Endothelial cell of umbilical vein (primary cell): ENCODE measurements at regions of chr4 and their contacts with region 1.

Region 1: GRCh38 chr4:110516106-110516922 is 40.4 kb downstream of the ENPEP start:
- DNase-seq: peak; percentile 86
- H3K4me3 ChIP-seq: peak overlapping the region; percentile 56 to 95 (median 79)
- H3K27ac ChIP-seq: peak overlapping the region; percentile 49
- H3K4me1 ChIP-seq: peaks cover 10% of the 10 kb centered on the region
- H3K27me3 ChIP-seq: peaks cover 0 to 4% of the 10 kb centered on the region in 2 experiments
- CTCF ChIP-seq: peak; percentile 80 to 82
- POLR2A ChIP-seq: no peak

Region 2: DNA sequence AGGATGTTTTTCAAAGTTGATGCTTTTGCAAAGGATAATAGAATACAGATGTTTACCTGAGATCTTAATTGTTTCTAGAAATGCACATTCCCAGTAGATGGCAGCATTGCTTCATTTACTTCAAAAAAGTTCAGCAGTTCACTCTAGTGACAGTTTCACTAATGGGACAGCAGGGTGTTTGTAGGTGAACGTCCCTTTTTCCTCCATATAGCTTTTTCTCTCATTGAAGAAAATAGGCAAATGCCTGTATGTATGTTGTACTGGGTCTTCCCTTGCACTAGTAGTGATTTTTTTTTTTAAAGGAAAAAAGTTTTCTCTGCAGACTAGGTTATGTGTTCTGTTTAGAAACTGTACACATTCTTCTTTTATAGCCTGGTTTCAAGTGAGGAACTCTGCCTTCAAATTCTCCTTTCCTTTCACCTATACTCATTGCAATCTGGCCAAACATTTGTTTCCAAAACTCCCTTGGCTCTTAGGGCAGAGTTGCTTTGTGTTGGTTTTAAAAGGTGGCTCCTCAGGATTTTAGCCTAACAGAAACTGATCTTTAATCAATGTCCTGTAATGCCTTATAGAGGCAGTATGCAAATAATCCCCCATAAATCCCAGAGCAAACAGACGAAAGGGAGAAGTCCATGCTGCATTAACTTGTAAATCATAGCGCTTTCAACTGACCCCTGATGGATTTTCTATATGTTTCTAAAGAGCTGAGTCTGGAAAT is 517.3 kb before region 1 on chr4:
- CTCF ChIA-PET with region 1: interaction called, 527 read pairs
- POLR2A ChIA-PET with region 1: no interaction called
- dilution Hi-C with region 1: no loop called
- intact Hi-C with region 1: loop called (anchors 1 kb)
- DNase-seq: peak; percentile 59
- H3K4me3 ChIP-seq: no peak overlapping the region
- H3K27ac ChIP-seq: no peak overlapping the region
- H3K4me1 ChIP-seq: no peaks in the 10 kb centered on the region
- H3K27me3 ChIP-seq: peaks cover 11 to 16% of the 10 kb centered on the region in 2 experiments
- CTCF ChIP-seq: peak; percentile 39 to 44
- POLR2A ChIP-seq: no peak

Region 3: GRCh38 chr4:110049951-110050925 is 466.1 kb before region 1 on chr4:
- CTCF ChIA-PET with region 1: interaction called, 14 read pairs
- POLR2A ChIA-PET with region 1: no interaction called
- dilution Hi-C with region 1: no loop called
- intact Hi-C with region 1: loop called (anchors 5 kb)
- DNase-seq: peak; percentile 46
- H3K4me3 ChIP-seq: no peak overlapping the region
- H3K27ac ChIP-seq: no peak overlapping the region
- H3K4me1 ChIP-seq: no peaks in the 10 kb centered on the region
- H3K27me3 ChIP-seq: no peaks in the 10 kb centered on the region
- CTCF ChIP-seq: peak; percentile 68 to 75
- POLR2A ChIP-seq: no peak

Region 4: DNA sequence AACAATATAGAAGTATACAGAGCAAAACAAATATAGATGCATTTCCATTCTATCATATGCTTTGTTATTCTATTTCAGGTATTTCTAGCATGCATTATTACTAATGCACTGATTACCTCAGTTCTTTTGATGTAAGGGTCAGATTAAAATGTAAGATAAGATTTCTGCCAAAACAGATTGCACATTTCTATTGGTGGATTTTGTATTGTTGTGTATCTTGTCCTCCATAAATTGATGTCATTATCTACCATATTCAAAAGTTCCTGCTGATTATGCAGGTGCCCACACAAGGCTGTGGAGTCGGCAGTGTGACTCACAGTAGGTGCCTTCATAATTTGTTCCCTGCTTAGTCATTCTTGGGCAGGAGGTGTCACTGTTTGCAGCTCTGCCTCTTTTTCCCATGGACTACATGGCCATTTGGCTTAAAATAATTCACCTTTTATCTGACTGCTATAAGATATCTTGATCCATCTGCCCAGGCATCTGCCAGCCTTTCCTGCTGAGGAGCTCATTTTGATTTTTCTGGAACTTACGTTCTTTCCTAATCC is 74.1 kb before region 1 on chr4:
- CTCF ChIA-PET with region 1: no interaction called
- POLR2A ChIA-PET with region 1: no interaction called
- dilution Hi-C with region 1: no loop called
- intact Hi-C with region 1: no loop called
- DNase-seq: no peak
- H3K4me3 ChIP-seq: no peak overlapping the region
- H3K27ac ChIP-seq: no peak overlapping the region
- H3K4me1 ChIP-seq: no peaks in the 10 kb centered on the region
- H3K27me3 ChIP-seq: no peaks in the 10 kb centered on the region
- CTCF ChIP-seq: no peak
- POLR2A ChIP-seq: no peak

Region 5: GRCh38 chr4:110533940-110534339 is 17.6 kb after region 1 on chr4:
- CTCF ChIA-PET with region 1: interaction called, 13 read pairs
- POLR2A ChIA-PET with region 1: interaction called, 4 read pairs
- dilution Hi-C with region 1: no loop called
- intact Hi-C with region 1: loop called (anchors 1 kb)
- DNase-seq: peak; percentile 94
- H3K4me3 ChIP-seq: peak overlapping the region in 1 of 3 experiments; percentile 54
- H3K27ac ChIP-seq: peak overlapping the region; percentile 94
- H3K4me1 ChIP-seq: peaks cover 38% of the 10 kb centered on the region
- H3K27me3 ChIP-seq: no peaks in the 10 kb centered on the region
- CTCF ChIP-seq: no peak
- POLR2A ChIP-seq: no peak

Region 6: DNA sequence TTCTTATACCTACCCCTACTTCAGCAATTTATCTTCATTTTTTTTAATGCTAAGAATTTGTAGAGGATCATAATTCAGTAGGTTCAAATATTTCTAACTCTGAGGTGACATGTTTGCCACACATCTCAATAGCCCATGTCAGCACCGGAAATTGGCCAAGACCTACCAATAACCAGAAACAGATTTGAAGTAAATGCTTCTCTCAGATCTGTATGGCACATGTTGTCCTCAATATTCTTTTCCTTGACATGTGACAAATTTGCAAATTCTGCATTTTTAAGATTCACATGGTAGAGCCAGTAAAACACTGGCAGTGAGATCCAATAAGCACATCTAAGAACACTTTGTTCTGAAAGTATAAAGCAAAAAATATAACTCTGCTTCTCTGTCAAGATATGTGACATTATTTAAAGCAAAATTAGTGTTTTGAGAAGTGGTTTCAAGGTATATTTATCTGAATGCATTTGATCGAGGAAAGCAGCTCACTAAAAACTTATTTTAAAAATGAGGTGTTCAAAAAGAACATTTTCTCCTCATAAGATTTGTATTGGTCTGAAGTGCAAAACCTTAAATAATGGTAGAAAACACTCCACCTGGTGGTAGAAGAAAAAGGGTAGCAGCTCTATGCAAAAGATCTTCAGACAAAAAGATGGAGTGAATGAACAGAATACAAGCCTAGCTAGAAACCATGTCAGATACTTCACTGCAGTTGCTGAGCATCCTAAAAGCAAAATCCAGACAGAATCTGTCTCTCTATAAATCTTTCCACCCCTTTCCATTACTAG is 1115.1 kb after region 1 on chr4:
- CTCF ChIA-PET with region 1: interaction called, 3 read pairs
- POLR2A ChIA-PET with region 1: no interaction called
- dilution Hi-C with region 1: no loop called
- intact Hi-C with region 1: loop called (anchors 10 kb)
- DNase-seq: peak; percentile 27
- H3K4me3 ChIP-seq: no peak overlapping the region
- H3K27ac ChIP-seq: no peak overlapping the region
- H3K4me1 ChIP-seq: no peaks in the 10 kb centered on the region
- H3K27me3 ChIP-seq: peaks cover 0 to 8% of the 10 kb centered on the region in 2 experiments
- CTCF ChIP-seq: peak; percentile 24 to 48
- POLR2A ChIP-seq: no peak